Endothelial cell of umbilical vein (primary cell): ENCODE measurements at regions of chr19 and their contacts with region 1.

Region 1: DNA sequence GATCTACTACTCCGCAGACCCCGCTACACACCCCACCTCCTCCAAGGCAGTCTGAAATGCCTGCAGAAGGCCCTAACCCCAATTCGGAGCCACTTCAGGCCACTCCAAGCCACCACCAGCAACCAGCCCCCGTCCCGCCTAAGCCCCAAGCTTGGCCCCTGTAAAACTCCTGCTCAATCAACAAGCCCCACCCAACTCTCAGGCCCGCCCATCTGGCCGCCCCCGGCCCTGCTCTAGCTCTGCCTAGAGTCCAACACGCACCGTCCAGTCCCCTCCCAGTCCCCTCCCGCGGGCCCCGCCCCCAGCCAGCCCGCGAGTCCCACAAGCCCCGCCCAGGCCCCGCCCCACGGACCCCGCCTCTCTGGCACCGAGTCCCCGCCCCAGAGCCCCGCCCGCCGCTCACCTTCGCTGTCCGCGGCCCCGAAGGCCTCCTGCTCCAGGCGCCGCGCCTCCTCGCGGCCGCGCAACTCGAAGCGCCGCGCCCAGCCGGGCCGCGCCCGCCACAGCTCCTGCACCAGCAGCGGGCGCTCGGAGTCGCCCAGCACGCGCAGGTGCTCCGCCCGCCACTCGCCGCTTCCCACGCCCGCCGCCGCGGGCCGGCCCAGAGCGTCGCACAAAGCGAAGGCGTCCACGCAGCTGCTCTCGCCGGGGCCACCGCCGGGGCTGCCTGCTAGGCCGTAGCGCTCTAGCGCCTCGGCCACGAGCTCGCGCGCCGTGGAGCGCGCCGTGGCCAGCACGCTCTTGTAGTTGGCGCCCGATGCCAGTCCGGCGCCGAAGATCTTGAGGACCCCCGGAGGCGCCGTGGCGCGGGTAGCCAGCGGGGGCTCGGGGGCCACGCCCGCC is 1.6 kb downstream of the RASIP1 start:
- DNase-seq: peak; percentile 94
- H3K4me3 ChIP-seq: peak overlapping the region; percentile 73 to 80 (median 77)
- H3K27ac ChIP-seq: peak overlapping the region; percentile 8
- H3K4me1 ChIP-seq: peaks cover 24% of the 10 kb centered on the region
- H3K27me3 ChIP-seq: no peaks in the 10 kb centered on the region
- CTCF ChIP-seq: peak; percentile 29 to 30
- POLR2A ChIP-seq: no peak

Region 2: GRCh38 chr19:48674921-48675824 is 63.6 kb before region 1 on chr19:
- CTCF ChIA-PET with region 1: interaction called, 54 read pairs
- POLR2A ChIA-PET with region 1: no interaction called
- dilution Hi-C with region 1: no loop called
- intact Hi-C with region 1: loop called (anchors 1 kb)
- DNase-seq: peak; percentile 88
- H3K4me3 ChIP-seq: no peak overlapping the region
- H3K27ac ChIP-seq: no peak overlapping the region
- H3K4me1 ChIP-seq: no peaks in the 10 kb centered on the region
- H3K27me3 ChIP-seq: no peaks in the 10 kb centered on the region
- CTCF ChIP-seq: peak; percentile 86 to 92
- POLR2A ChIP-seq: no peak

Region 3: DNA sequence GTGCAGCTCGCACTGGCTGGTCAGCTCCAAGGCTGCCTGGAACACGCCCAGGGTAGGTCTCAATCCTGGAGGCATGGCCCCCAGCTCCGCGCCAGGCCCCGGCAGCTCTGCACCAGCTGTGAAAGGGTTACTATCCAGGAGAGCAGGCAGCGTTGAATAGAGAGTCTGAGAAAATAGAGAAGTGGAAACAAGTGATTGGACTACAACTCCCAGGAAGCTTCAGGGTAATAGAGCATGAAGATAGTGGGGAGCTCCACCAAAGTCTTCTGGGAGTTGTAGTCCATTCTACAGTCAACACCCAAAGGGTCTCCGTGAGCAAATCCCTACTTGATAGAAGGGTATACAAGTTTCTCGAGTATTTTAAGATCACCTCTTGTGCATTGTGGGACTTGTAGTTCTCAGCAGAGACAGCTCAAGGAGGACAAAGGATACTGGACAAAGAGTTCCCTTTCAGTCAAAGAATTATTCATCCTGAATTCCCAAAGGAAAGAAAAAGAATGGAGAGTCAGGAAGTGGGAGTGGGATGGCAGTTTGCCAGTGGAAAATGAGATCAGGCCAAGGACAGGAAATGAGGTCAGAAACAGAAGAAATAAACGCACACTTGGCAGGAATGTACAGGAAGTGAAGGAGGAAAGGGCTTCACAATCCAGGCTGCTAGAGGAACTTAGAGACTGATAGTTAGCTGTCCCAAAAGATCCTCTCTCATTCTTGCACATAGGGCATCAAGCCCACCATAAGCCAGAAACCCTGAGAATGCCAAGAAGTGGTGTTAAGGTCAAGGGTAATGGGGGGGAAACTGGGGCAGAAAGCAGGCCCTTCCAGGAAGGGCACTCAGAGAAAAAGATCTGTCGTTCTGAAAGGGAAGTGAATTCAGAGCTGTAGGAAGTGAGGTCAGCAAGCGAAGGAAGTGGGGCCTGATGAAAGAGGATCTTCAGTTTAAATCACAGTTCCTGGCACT is 13.7 kb before region 1 on chr19:
- CTCF ChIA-PET with region 1: interaction called, 30 read pairs
- POLR2A ChIA-PET with region 1: interaction called, 3 read pairs
- dilution Hi-C with region 1: no loop called
- intact Hi-C with region 1: loop called (anchors 1 kb)
- DNase-seq: peak; percentile 100
- H3K4me3 ChIP-seq: no peak overlapping the region
- H3K27ac ChIP-seq: peak overlapping the region; percentile 97
- H3K4me1 ChIP-seq: peaks cover 33% of the 10 kb centered on the region
- H3K27me3 ChIP-seq: no peaks in the 10 kb centered on the region
- CTCF ChIP-seq: no peak
- POLR2A ChIP-seq: no peak

Region 4: GRCh38 chr19:48760504-48761205 is 21.9 kb after region 1 on chr19:
- CTCF ChIA-PET with region 1: no interaction called
- POLR2A ChIA-PET with region 1: no interaction called
- dilution Hi-C with region 1: no loop called
- intact Hi-C with region 1: no loop called
- DNase-seq: peak; percentile 48
- H3K4me3 ChIP-seq: no peak overlapping the region
- H3K27ac ChIP-seq: no peak overlapping the region
- H3K4me1 ChIP-seq: peaks cover 6% of the 10 kb centered on the region
- H3K27me3 ChIP-seq: peaks cover 0 to 3% of the 10 kb centered on the region in 2 experiments
- CTCF ChIP-seq: no peak
- POLR2A ChIP-seq: no peak

Region 5: DNA sequence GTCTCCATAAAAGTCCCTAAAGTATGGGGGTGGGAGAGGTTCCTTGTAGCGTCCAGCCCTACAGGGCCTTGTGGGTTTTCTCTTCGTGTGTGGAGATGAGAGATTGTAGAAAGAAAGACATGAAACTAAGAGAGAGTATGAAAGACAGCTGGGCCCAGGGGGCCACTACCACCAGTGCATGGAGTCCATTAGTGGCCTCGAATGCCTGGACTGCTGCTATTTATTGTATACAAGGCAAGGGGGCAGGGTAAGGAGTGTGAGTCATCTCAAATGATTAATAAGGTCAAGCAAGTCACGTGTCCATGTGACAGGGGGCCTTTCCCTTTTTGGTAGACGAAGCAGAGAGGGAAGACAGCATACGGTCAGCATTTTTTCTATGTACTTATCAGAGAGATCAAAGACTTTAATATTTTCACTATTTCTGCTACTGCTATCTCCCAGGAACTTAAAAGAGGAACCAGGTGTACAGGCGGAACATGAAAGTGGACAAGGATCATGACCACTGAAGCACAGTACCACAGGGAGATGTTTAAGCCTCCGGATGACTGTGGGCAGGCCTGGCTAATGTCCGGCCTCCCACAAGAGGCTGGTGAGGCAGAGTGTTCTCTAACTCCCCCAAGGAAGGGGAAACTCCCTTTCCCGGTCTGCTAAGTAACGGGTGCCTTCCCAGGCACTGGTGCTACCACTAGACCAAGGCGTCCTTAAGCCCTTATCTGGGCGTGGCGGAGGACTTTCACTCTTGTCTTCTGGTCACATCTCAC is 42.0 kb after region 1 on chr19:
- CTCF ChIA-PET with region 1: interaction called, 10 read pairs
- POLR2A ChIA-PET with region 1: interaction called, 3 read pairs
- dilution Hi-C with region 1: no loop called
- intact Hi-C with region 1: loop called (anchors 2 kb)
- DNase-seq: peak; percentile 43
- H3K4me3 ChIP-seq: no peak overlapping the region
- H3K27ac ChIP-seq: peak overlapping the region; percentile 53
- H3K4me1 ChIP-seq: peaks cover 9% of the 10 kb centered on the region
- H3K27me3 ChIP-seq: no peaks in the 10 kb centered on the region
- CTCF ChIP-seq: no peak
- POLR2A ChIP-seq: no peak

Region 6: GRCh38 chr19:48835734-48836088 is 96.9 kb after region 1 on chr19:
- CTCF ChIA-PET with region 1: interaction called, 3 read pairs
- POLR2A ChIA-PET with region 1: no interaction called
- dilution Hi-C with region 1: no loop called
- intact Hi-C with region 1: loop called (anchors 5 kb)
- DNase-seq: peak; percentile 87
- H3K4me3 ChIP-seq: peak overlapping the region; percentile 38 to 61 (median 57)
- H3K27ac ChIP-seq: peak overlapping the region; percentile 52
- H3K4me1 ChIP-seq: peaks cover 5% of the 10 kb centered on the region
- H3K27me3 ChIP-seq: no peaks in the 10 kb centered on the region
- CTCF ChIP-seq: peak; percentile 88 to 92
- POLR2A ChIP-seq: no peak